ENCODE measurements at regions of chr11 and their contacts with region 1.

Region 1: GRCh38 chr11:64204464-64204989 is 2.0 kb upstream of the FERMT3 start:
- DNase-seq: peak; percentile 95 to 98 (median 96)
- H3K4me3 ChIP-seq: peak overlapping the region in 1 of 7 experiments; percentile 1
- H3K27ac ChIP-seq: no peak overlapping the region
- H3K4me1 ChIP-seq: peaks cover 5 to 55% (median 53%) of the 10 kb centered on the region in 4 experiments
- H3K27me3 ChIP-seq: no peaks in the 10 kb centered on the region

Region 2: GRCh38 chr11:64185816-64186498 is 18.6 kb before region 1 on chr11 and contains the start of gene STIP1:
- CTCF ChIA-PET with region 1: interaction called, 88 read pairs
- POLR2A ChIA-PET with region 1: interaction called, 19 read pairs
- DNase-seq: peak; percentile 100
- H3K4me3 ChIP-seq: peak within 1 kb of the TSS; percentile 52 to 89 (median 74)
- H3K27ac ChIP-seq: peak within 1 kb of the TSS; percentile 47 to 74
- H3K4me1 ChIP-seq: peaks cover 3 to 43% (median 21%) of the 10 kb centered on the region in 4 experiments
- H3K27me3 ChIP-seq: no peaks in the 10 kb centered on the region

Region 3: DNA sequence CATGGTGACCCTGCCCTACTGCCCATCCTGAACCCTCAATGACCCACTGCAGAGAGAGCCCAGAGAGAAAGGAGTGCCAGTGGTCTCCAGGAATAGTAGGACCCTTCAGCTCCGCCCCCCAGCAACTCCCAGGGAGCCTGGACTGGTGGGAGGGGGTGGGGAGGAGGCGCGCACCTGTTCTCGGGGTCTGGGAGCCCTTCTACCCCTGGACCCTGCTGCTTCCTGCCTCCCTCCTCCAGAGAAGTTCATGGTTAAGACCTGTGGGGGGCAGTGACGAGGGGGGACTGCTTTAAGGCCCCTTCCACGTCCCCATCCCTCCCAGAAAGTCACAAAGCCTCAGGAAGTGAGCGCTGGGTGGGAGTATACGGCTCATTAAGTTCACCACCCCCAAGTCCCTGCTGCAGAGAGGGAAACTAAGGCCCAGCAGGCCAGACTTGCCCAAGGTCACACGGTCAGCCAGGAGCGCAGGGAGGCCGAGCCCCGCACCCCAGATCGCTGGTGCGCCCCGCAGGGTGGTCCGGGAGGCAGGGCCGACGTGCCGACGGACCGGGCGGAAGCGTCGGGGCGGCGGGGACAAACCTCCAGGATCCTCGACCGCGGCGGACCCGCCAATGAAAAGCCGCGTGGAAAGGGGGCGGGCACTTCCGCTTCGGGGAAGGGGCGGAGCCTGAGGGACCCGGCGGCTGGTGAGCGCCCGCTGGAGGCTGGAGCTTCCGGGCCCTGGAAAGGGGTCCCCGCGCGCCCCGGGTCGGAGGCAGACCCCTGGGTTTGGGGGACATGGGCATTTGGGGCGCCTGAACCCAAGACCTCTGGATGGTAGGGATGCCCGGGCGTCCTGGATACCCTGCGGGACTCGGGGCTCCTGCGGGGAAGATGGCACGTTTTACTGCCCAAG is 21.3 kb after region 1 on chr11 and contains the starts of genes NUDT22 and TRPT1:
- CTCF ChIA-PET with region 1: interaction called, 321 read pairs
- POLR2A ChIA-PET with region 1: interaction called, 27 read pairs
- DNase-seq: peak; percentile 78 to 89 (median 85)
- H3K4me3 ChIP-seq: peak within 1 kb of the TSS; percentile 35 to 93 (median 77)
- H3K27ac ChIP-seq: peak within 1 kb of the TSS; percentile 33 to 87
- H3K4me1 ChIP-seq: peaks cover 0 to 48% (median 40%) of the 10 kb centered on the region in 4 experiments
- H3K27me3 ChIP-seq: no peaks in the 10 kb centered on the region

Region 4: DNA sequence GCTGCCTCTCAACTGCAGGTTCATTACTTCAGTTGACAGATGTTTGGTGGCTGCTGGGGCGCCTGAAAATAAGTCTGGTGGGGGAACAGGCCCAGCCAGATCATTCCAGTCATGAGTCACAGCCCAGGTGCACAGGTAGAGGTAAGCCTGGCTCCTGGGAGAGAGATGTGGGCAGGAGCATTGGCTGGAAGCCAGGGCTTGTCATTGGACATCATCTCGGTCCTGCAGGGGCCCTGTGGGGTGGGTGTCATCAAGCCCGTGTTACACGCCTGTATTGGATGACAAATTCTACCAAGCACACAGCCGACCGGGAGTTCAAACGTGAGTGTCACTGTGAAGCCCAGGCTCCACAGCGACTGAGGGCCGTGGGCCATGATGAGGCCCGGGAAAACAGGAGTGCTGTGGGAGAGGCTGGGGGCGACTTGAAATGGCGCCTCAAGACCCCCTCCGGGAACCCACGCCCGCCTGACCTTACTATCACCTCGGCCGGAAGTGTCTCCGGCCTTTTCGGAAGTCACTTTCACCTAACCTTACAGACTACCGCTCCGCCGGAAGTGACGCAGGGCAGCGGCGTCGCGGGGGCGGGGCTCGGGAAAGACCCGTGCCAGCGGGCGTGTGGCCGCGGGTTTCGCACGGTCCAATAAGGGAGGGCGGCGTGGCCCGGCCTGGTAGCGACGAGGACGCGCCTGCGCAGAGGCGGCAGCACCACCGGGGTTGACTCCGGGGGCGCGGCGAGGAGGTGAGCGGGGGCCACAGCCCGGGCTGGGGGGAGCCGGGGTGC is 36.1 kb after region 1 on chr11 and contains the start of gene FKBP2:
- CTCF ChIA-PET with region 1: interaction called, 177 read pairs
- POLR2A ChIA-PET with region 1: interaction called, 74 read pairs
- DNase-seq: peak; percentile 96 to 98 (median 98)
- H3K4me3 ChIP-seq: peak within 1 kb of the TSS; percentile 69 to 91 (median 85)
- H3K27ac ChIP-seq: peak within 1 kb of the TSS; percentile 96 to 97
- H3K4me1 ChIP-seq: peaks cover 4 to 56% (median 49%) of the 10 kb centered on the region in 4 experiments
- H3K27me3 ChIP-seq: no peaks in the 10 kb centered on the region

Region 5: DNA sequence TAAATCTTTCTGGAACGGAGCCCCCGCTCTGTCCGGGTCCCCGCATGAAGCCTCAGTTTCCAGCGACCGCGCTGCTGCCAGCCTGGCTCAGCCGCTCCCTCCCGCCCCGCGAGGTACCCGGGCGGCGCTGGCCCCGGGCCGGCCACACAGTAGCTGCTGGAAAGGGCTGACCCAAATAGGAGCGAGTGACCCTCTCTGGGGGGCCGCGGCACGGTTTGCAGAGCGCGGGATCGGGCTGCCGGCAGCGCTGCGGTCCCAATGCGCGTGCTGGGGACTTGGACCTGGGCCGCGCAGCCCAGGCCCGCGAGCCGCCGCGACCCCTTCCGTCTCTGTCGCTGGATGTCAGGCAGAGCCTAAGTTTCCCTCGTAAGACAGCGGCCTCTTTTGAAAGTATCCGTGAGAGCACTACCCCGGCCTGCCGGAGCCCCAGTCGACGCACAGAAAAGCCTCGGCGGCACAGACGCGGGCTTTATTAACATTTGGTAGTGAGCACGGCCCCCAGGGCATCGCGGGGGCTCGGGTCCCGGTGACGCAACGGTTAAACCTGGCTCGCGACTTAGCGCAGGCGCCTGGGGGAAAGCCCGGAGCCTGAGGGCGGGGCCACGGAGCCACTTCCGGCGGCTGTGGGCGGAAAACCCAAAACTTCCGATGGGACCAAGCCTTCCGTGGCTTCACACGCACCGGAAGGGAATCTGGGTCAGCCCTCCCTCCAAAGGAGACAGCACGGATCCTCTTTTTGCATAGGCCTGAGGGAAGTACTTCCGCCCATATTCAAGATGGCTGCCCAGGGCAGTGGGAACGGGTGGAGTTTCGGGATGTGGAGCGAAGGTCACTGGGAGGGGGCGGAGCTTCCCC is 65.1 kb after region 1 on chr11:
- CTCF ChIA-PET with region 1: interaction called, 53 read pairs
- POLR2A ChIA-PET with region 1: interaction called, 28 read pairs
- DNase-seq: peak; percentile 98 to 99 (median 99)
- H3K4me3 ChIP-seq: peak overlapping the region; percentile 76 to 94 (median 86)
- H3K27ac ChIP-seq: peak overlapping the region; percentile 88 to 96
- H3K4me1 ChIP-seq: peaks cover 4 to 51% (median 41%) of the 10 kb centered on the region in 4 experiments
- H3K27me3 ChIP-seq: no peaks in the 10 kb centered on the region

Region 6: GRCh38 chr11:64304316-64305072 is 100.0 kb after region 1 on chr11:
- CTCF ChIA-PET with region 1: interaction called, 123 read pairs
- POLR2A ChIA-PET with region 1: interaction called, 26 read pairs
- DNase-seq: peak; percentile 90 to 94 (median 91)
- H3K4me3 ChIP-seq: peak overlapping the region; percentile 52 to 92 (median 78)
- H3K27ac ChIP-seq: peak overlapping the region; percentile 40 to 82
- H3K4me1 ChIP-seq: peaks cover 7 to 44% (median 40%) of the 10 kb centered on the region in 4 experiments
- H3K27me3 ChIP-seq: peaks cover 0 to 20% (median 13%) of the 10 kb centered on the region in 5 experiments

Region 7: DNA sequence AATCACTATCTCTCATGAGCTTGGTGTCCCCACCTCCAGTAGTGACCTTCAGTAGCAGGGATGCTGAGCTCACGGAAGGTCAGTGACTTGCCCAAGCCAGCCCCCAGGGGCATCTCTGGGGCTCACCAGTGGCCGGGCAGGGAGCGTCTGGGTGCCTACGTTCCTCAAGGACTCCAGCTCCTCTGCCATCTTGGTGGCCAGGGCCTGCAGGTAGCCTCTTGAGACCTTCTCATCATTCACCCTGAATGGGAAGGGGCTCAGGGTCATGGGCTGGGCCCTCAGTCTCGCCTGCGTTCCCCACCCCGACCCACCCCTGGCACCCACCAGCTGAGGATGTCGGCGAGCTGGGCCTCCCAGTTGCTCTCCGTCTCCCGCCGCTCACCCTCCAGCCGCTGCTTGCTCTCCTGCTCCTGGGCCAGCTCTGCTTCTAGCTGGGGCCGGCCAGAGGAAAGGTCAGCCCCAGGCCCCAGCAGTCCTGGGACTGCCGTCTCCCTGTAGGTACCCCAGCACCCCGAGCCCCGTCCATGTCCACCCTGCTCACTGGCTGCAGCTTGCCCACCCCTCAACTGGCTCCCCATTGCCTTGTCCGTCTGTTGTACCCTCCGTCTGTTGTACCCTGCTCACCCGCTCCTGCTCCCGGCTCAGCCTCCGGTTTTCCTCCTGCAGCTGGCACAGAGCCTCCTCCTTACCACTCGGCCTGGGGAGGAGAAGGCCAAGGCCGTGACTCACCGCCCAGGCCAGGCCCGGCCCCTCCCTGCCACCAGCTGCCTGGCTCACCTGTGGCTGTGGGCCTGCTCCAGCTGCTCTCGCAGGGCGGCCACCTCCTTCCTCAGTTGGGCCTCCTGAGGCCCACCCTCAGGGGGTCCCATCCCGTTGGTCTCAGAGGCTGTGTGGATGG is 630.4 kb after region 1 on chr11:
- CTCF ChIA-PET with region 1: no interaction called
- POLR2A ChIA-PET with region 1: no interaction called
- DNase-seq: no peak
- H3K4me3 ChIP-seq: no peak overlapping the region
- H3K27ac ChIP-seq: no peak overlapping the region
- H3K4me1 ChIP-seq: peaks cover 0 to 4% (median 0%) of the 10 kb centered on the region in 4 experiments
- H3K27me3 ChIP-seq: no peaks in the 10 kb centered on the region

Measured in common myeloid progenitor, CD34-positive (primary cell).